ENCODE measurements at regions of chr9 and their contacts with region 1.

Region 1: DNA sequence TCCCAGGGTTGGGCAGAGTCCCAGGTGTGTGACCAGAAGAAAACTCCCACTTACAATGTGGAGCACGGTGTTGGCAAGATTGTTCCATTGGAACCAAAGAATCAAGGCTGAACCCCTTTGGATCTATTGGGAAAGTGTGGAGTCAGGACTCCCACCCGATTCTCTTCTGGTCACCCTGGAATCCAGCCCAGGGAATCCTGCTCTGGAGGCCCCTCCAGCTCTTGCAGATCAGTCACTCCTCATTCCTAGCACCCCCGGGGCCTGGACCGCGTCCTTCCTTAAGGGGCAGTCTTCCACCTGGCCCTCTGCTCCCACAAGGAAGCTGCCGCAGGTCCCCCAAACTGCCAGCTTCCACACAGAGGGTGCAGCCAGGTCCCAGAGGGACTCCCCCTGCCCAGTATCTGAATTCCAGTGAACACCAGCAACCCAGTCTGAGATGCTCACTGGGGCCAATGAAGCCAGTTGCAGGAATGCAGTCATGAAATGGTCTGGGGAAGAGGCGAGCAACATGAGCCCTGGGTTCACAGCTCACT is 170.1 kb downstream of the GADD45G start:
- DNase-seq: no peak
- H3K4me3 ChIP-seq: no peak overlapping the region
- H3K27ac ChIP-seq: no peak overlapping the region
- H3K4me1 ChIP-seq: no peaks in the 10 kb centered on the region
- H3K27me3 ChIP-seq: peaks cover 0 to 5% of the 10 kb centered on the region in 2 donors
- CTCF ChIP-seq: no peak
- POLR2A ChIP-seq: no peak

Region 2: GRCh38 chr9:89730715-89731114 is 44.2 kb before region 1 on chr9:
- intact Hi-C with region 1: loop called (anchors 1 kb)
- DNase-seq: peak in 1 of 2 donors; percentile 58
- H3K4me3 ChIP-seq: no peak overlapping the region
- H3K27ac ChIP-seq: no peak overlapping the region
- H3K4me1 ChIP-seq: no peaks in the 10 kb centered on the region
- H3K27me3 ChIP-seq: no peaks in the 10 kb centered on the region
- CTCF ChIP-seq: no peak
- POLR2A ChIP-seq: no peak

Region 3: GRCh38 chr9:89802781-89803355 is 27.9 kb after region 1 on chr9:
- intact Hi-C with region 1: no loop called
- DNase-seq: peak; percentile 21 to 63
- H3K4me3 ChIP-seq: no peak overlapping the region
- H3K27ac ChIP-seq: no peak overlapping the region
- H3K4me1 ChIP-seq: no peaks in the 10 kb centered on the region
- H3K27me3 ChIP-seq: no peaks in the 10 kb centered on the region
- CTCF ChIP-seq: no peak
- POLR2A ChIP-seq: no peak

Measured in breast epithelium (tissue), 4 donors.